GM10248 (cell line): ENCODE measurements at regions of chr17 and their contacts with region 1.

Region 1: DNA sequence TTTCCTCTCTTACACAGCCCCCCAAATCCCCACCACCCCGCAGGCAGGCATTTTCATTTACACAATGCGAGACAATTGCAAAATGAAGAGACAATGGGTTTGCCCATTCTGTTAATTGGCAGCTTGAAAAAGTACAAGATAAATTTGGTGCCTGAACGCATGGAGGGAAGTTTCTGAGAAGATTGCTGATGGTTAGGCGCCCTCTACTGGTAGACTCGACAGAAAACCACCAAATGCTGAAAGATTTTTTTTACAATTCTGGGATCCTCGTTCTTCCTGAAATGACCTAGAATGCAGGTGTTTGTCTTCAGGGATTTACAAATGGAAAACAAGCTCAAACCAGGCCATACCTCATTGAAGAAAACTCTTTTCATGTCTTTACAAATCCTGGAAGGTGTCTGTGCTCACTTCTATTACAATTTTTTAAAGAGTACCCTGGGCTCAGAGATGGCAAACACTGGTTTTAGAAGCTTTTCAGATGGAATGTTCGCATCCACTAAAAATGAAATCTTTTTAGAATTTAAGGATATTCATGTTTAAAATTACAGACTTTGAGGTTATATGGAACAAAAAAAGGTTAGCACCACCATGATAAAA is 338.5 kb downstream of the PMP22 start:
- DNase-seq: peak; percentile 37
- CTCF ChIP-seq: peak; percentile 72

Region 2: GRCh38 chr17:13594762-13595598 is 1331.6 kb before region 1 on chr17:
- CTCF ChIA-PET with region 1: interaction called, 22 read pairs
- POLR2A ChIA-PET with region 1: no interaction called
- DNase-seq: peak; percentile 61
- CTCF ChIP-seq: peak; percentile 73

Region 3: DNA sequence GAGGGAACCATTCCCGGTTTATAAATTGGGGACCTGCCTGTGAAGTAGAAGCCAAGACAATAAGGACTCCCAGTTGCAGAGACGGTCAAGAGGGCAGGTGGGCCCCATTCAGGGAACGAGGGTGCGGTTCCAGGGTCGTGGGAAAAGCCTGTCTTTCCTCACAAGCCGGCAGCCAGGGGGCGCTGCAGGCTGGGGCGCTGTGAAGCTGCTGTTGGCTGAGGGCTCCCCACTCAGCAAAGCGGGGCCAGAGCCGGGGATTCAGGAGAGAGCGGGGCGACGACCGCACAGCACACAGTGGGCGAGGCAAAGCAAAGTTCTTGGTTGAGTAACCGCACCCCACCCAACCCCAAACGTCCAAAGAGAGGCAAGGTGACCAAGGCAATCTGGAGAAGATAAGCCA is 714.8 kb before region 1 on chr17:
- CTCF ChIA-PET with region 1: interaction called, 10 read pairs
- POLR2A ChIA-PET with region 1: no interaction called
- DNase-seq: peak; percentile 47
- CTCF ChIP-seq: peak; percentile 47

Region 4: DNA sequence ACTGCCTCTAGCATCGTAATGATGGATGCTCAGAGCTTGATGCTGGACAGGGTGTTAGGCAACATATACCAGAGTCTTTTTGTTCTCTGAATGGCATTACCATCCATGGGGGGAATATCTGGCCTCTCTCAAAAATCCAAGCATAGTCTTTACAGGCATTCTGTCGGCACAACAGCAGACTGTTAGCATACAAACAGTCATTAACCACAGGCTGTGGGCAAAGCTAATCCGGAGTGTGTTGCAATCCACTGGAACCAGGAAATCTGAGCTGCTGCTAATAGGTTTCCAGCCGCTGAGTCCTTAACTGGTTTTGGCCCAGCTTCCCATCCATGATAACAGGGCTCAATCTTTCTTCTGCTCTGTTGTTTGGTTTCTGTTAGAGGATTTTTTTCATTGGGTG is 253.8 kb before region 1 on chr17:
- CTCF ChIA-PET with region 1: no interaction called
- POLR2A ChIA-PET with region 1: no interaction called
- DNase-seq: no peak
- CTCF ChIP-seq: no peak

Region 5: GRCh38 chr17:14748031-14748710 is 178.5 kb before region 1 on chr17:
- CTCF ChIA-PET with region 1: no interaction called
- POLR2A ChIA-PET with region 1: no interaction called
- DNase-seq: peak; percentile 25
- CTCF ChIP-seq: no peak

Region 6: GRCh38 chr17:14942526-14943190 is 16.0 kb after region 1 on chr17:
- CTCF ChIA-PET with region 1: interaction called, 24 read pairs
- POLR2A ChIA-PET with region 1: no interaction called
- DNase-seq: no peak
- CTCF ChIP-seq: no peak